ENCODE measurements at regions of chr22 and their contacts with region 1.

Region 1: DNA sequence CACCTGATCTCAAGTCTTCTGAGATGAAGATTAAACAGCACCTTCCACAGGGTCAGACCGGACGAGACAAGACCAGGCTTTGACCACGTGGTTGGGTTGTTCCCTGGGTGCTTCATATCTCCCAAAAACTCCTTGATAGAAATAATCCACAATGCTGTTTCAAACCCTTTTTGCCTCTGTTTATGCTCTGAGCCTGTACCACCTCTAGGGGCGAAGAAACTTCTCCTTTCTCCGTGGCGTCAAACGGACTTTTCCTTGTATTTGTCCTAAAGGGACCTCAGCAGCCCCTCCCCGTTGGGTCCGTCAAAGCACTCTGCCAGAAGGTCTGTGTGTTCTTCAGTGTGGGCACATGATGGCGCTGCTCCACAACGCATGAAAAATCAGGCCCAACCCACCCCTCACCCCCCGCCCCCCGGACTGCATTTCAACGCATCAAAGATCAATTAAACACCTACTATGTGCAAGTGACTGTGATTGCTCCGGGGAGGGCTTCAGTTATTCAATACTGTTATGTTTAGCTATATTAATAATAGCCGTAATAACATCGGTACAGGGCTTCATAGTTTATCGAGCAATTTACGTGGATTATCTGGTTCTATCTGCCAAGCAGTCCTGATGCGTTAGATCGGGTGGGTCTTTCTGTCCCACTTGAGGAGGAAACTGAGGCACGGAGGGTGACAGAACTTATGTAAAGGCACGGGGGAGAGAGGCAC is 17.3 kb upstream of the EIF3D start:
- DNase-seq: peak; percentile 67
- H3K4me3 ChIP-seq: no peak overlapping the region
- H3K27ac ChIP-seq: no peak overlapping the region
- H3K4me1 ChIP-seq: peaks cover 12% of the 10 kb centered on the region
- CTCF ChIP-seq: peak; percentile 80

Region 2: DNA sequence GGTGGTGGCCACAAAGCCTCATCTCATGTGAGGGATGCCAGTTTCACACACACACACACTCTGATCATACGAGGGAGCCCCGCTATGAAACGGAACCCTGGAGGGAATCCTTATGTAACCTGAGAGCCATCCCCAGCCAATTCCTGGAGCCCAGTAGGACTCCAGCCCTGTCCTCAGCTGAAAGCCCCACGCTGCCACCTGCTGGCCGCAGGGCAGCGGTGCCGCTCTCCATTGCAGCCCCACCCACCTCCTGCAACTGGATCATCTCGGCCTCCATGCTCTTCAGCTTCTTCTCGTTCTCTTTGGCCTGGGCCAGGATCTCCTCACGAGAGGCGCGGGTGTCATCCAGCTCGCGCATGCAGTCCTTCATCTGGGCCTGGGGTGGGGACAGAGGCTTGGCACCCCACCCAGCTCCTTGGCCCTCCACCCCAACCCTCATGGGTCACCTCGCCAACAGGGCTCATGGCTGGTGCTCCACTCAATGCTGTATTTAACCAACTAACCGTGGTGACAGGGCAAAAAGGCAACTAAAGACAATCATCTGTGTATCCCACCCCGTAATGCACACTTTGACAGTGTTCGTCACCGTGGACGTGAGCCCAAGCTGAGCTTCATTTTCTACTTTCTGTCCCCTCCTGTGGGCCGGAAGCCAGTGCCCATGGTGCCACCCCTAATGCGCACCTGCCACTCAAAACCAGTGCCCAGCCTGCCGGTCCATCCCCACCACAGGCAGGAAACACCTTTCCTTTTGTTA is 259.6 kb before region 1 on chr22:
- CTCF ChIA-PET with region 1: no interaction called
- POLR2A ChIA-PET with region 1: no interaction called
- intact Hi-C with region 1: no loop called
- DNase-seq: peak; percentile 69
- H3K4me3 ChIP-seq: no peak overlapping the region
- H3K27ac ChIP-seq: no peak overlapping the region
- H3K4me1 ChIP-seq: no peaks in the 10 kb centered on the region
- CTCF ChIP-seq: peak; percentile 92

Region 3: DNA sequence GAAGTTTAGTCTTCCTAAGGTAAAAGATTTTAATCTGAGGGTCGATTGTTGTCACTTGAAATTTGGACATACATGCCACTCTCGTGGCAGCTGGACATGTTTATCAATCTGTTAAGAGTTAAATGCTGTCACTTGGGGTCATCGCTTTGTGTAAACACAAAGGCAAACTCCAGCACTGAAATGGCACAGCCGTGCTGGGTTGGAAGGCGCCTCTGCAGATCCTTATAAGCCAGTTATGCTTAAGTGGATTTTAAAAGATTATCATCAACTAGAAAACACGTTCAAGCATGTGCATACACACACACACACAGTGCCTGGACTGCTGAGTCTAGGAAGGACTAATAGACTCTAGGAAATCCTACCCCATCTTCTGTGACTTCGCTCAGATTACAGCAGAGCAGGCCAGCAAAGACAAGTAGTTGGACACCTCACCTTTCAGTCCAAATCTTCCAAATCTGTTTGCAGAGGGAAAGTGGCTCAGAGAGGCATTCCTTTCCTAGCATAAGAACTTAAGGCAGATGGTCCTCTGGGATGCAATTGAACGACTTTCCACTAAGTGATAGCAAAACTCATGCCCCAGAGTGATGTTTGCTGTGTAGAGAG is 73.7 kb after region 1 on chr22:
- CTCF ChIA-PET with region 1: no interaction called
- POLR2A ChIA-PET with region 1: no interaction called
- intact Hi-C with region 1: loop called (anchors 10 kb)
- DNase-seq: no peak
- H3K4me3 ChIP-seq: no peak overlapping the region
- H3K27ac ChIP-seq: no peak overlapping the region
- H3K4me1 ChIP-seq: no peaks in the 10 kb centered on the region
- CTCF ChIP-seq: no peak

Region 4: GRCh38 chr22:36757668-36758211 is 211.5 kb after region 1 on chr22:
- CTCF ChIA-PET with region 1: no interaction called
- POLR2A ChIA-PET with region 1: no interaction called
- intact Hi-C with region 1: loop called (anchors 1 kb)
- DNase-seq: peak; percentile 77
- H3K4me3 ChIP-seq: no peak overlapping the region
- H3K27ac ChIP-seq: no peak overlapping the region
- H3K4me1 ChIP-seq: no peaks in the 10 kb centered on the region
- CTCF ChIP-seq: peak; percentile 85

Region 5: DNA sequence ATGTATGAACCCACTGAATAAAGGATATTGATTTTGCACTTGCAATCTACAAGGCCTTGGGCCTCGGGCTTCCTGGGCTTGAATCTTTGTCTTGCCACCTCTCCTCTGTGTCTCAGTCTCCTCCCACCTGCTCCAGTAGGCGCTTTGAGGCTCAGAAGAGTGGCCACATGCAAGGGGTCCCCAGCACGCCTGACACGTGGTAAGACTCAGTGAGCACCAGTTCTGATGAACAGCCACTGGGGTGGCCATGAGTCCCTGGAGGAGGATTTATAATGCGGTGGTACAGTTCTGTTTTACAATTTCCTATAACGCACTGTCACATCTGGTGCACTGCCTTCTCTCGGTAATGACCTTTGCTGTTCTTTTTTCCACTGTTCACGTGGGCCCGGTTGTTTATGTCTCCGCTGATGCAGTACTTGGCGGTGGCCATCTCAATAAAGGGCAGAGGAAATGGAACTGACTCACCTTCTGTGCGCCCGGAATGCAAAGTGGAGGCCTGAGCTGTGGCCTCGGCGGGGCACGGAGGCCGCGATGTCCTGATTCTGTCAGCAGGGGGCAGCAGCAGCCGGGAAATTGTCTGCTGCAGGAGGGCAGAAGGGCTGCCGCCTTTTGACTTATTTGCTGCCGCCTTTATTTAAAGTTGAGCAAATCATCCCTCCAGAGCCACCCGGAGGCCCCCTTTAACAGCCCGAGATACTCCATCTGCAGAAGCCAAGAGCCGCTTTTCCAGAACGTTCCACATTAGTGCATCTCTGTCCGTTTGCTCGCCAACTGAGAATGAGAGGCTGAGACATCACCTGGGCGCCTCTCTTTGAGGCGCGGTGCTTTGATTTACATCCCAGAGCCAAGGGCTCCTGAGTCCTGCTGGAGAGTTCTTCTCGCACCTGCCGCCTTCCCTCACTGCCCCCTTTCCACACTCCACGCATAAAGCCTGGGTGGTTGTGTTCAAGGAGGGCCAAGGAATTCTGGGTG is 235.7 kb after region 1 on chr22:
- CTCF ChIA-PET with region 1: no interaction called
- POLR2A ChIA-PET with region 1: no interaction called
- intact Hi-C with region 1: loop called (anchors 5 kb)
- DNase-seq: peak; percentile 80
- H3K4me3 ChIP-seq: no peak overlapping the region
- H3K27ac ChIP-seq: no peak overlapping the region
- H3K4me1 ChIP-seq: peaks cover 6% of the 10 kb centered on the region
- CTCF ChIP-seq: peak; percentile 97

Region 6: GRCh38 chr22:36856121-36856791 is 310.0 kb after region 1 on chr22:
- CTCF ChIA-PET with region 1: no interaction called
- POLR2A ChIA-PET with region 1: no interaction called
- intact Hi-C with region 1: loop called (anchors 1 kb)
- DNase-seq: peak; percentile 93
- H3K4me3 ChIP-seq: peak overlapping the region; percentile 24
- H3K27ac ChIP-seq: no peak overlapping the region
- H3K4me1 ChIP-seq: peaks cover 60% of the 10 kb centered on the region
- CTCF ChIP-seq: peak; percentile 100

Region 7: GRCh38 chr22:36977947-36978660 is 431.9 kb after region 1 on chr22:
- CTCF ChIA-PET with region 1: no interaction called
- POLR2A ChIA-PET with region 1: no interaction called
- intact Hi-C with region 1: loop called (anchors 2 kb)
- DNase-seq: peak; percentile 93
- H3K4me3 ChIP-seq: peak overlapping the region; percentile 66
- H3K27ac ChIP-seq: no peak overlapping the region
- H3K4me1 ChIP-seq: peaks cover 5% of the 10 kb centered on the region
- CTCF ChIP-seq: peak; percentile 92

Region 8: GRCh38 chr22:37019309-37020125 is 473.3 kb after region 1 on chr22 and contains the starts of genes MPST and TST:
- CTCF ChIA-PET with region 1: no interaction called
- POLR2A ChIA-PET with region 1: interaction called, 10 read pairs
- intact Hi-C with region 1: no loop called
- DNase-seq: peak; percentile 86
- H3K4me3 ChIP-seq: peak within 1 kb of the TSS; percentile 90
- H3K27ac ChIP-seq: peak within 1 kb of the TSS; percentile 46
- H3K4me1 ChIP-seq: peaks cover 13% of the 10 kb centered on the region
- CTCF ChIP-seq: peak; percentile 24; the same call in 1 of the 2 replicates
- total RNA-seq, gene MPST: 105 and 124 TPM in 2 replicates
- total RNA-seq, gene TST: 36.0 and 37.6 TPM in 2 replicates

Measured in OCI-LY7 (cell line).